ENCODE measurements at regions of chr1 and their contacts with region 1.

Region 1: DNA sequence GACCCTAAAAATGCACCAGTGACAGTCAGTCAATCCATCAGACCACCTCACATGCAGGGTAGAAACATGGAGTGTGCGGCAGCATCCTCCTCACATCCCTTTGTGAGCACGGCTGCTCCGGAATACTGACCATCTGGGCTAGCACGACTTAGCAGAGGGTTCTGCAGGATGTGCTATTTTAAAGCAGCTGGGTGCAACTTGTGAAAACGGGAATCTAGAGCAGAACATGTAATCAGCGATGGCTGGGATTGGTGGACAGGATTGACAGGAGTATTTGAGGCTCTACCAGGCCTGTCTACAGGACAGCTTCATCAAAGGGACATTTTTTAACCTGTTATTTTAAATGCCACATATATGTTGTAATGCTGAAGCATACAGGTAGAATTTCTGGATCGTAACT is 16.8 kb upstream of the PLEKHM2 start:
- DNase-seq: no peak
- ATAC-seq: no peak
- H3K4me3 ChIP-seq: no peak overlapping the region
- H3K27ac ChIP-seq: no peak overlapping the region
- H3K4me1 ChIP-seq: no peaks in the 10 kb centered on the region
- H3K27me3 ChIP-seq: no peaks in the 10 kb centered on the region
- CTCF ChIP-seq: no peak
- EP300 ChIP-seq: no peak
- POLR2A ChIP-seq: 0 out of 2 replicates have a peak, but pooled peaks have one; percentile 21
- RAD21 ChIP-seq: no peak

Region 2: DNA sequence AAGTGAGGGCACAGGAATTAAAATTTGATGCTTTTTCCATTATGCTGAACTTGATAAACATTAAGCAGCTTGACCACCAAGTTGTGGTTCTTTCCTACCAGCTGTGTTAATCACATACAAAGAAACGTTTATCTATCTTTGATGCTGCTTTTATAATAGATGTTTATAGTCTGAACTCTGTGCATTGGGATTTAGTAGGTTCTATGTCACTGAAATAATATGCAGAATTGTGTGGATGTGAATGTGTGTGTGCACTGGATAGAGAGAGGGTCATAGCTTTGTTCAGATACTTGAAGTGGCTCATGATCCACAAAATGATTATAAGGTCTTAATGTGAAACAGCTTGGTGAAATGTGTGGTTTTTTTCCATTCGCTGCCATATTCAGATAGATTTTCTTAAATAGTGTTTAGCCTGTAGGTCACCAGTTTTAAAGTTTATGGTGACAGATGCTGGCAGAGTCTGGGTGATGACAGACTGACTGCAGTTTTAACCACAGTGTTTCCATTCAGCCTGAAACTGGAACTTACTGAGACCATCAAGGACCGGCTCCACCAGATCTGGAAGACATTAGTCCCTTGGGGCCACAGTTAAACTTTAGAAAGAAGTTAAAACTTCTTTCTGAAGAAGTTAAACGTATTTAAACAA is 39.9 kb before region 1 on chr1:
- CTCF ChIA-PET with region 1: no interaction called
- POLR2A ChIA-PET with region 1: no interaction called
- RAD21 ChIA-PET with region 1: no interaction called
- SMC1A ChIA-PET with region 1: interaction called, 12 read pairs
- in situ Hi-C with region 1: no loop called
- intact Hi-C with region 1: no loop called
- DNase-seq: peak; percentile 45
- ATAC-seq: peak; percentile 96
- H3K4me3 ChIP-seq: no peak overlapping the region
- H3K27ac ChIP-seq: peak overlapping the region; percentile 8; the same call in 1 of the 2 replicates
- H3K4me1 ChIP-seq: peaks cover 16% of the 10 kb centered on the region
- H3K27me3 ChIP-seq: no peaks in the 10 kb centered on the region
- CTCF ChIP-seq: no peak
- EP300 ChIP-seq: no peak; a peak in 1 of 4 replicates
- POLR2A ChIP-seq: no peak
- RAD21 ChIP-seq: no peak

Region 3: DNA sequence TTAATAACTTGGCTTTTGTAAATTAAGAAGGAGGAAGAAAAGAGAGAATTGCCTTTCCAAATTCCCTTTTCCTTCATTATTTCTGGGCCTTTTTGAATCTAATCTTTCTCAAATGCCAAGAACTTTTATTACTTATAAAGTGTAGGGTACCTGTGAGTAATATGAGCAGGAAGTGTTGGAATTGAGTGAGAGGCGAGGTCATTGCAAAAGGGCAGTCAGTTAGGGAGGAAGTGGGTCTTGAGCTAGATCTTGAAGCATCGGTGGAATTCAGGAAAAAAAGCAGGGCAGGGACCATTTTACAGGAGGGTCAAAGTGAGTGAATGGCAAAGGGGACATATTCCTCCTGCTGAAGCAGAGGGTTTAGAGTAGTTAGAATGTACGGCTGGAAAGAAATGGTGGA is 26.7 kb before region 1 on chr1:
- CTCF ChIA-PET with region 1: no interaction called
- POLR2A ChIA-PET with region 1: no interaction called
- RAD21 ChIA-PET with region 1: no interaction called
- SMC1A ChIA-PET with region 1: no interaction called
- in situ Hi-C with region 1: no loop called
- intact Hi-C with region 1: no loop called
- DNase-seq: no peak
- ATAC-seq: no peak
- H3K4me3 ChIP-seq: no peak overlapping the region
- H3K27ac ChIP-seq: no peak overlapping the region
- H3K4me1 ChIP-seq: no peaks in the 10 kb centered on the region
- H3K27me3 ChIP-seq: no peaks in the 10 kb centered on the region
- CTCF ChIP-seq: no peak
- EP300 ChIP-seq: no peak
- POLR2A ChIP-seq: no peak
- RAD21 ChIP-seq: no peak

Region 4: GRCh38 chr1:15654091-15654690 is 13.2 kb before region 1 on chr1:
- CTCF ChIA-PET with region 1: interaction called, 6 read pairs
- POLR2A ChIA-PET with region 1: interaction called, 4 read pairs
- RAD21 ChIA-PET with region 1: no interaction called
- SMC1A ChIA-PET with region 1: interaction called, 13 read pairs
- in situ Hi-C with region 1: no loop called
- intact Hi-C with region 1: no loop called
- DNase-seq: no peak
- ATAC-seq: no peak
- H3K4me3 ChIP-seq: no peak overlapping the region
- H3K27ac ChIP-seq: no peak overlapping the region
- H3K4me1 ChIP-seq: no peaks in the 10 kb centered on the region
- H3K27me3 ChIP-seq: no peaks in the 10 kb centered on the region
- CTCF ChIP-seq: no peak
- EP300 ChIP-seq: no peak
- POLR2A ChIP-seq: no peak
- RAD21 ChIP-seq: no peak

Region 5: GRCh38 chr1:15949453-15950245 is 282.3 kb after region 1 on chr1:
- CTCF ChIA-PET with region 1: no interaction called
- POLR2A ChIA-PET with region 1: no interaction called
- RAD21 ChIA-PET with region 1: no interaction called
- SMC1A ChIA-PET with region 1: no interaction called
- in situ Hi-C with region 1: no loop called
- intact Hi-C with region 1: no loop called
- DNase-seq: peak; percentile 71
- ATAC-seq: peak; percentile 92
- H3K4me3 ChIP-seq: peak overlapping the region; percentile 34; the same call in 1 of the 2 replicates
- H3K27ac ChIP-seq: peak overlapping the region; percentile 79
- H3K4me1 ChIP-seq: peaks cover 40% of the 10 kb centered on the region
- H3K27me3 ChIP-seq: no peaks in the 10 kb centered on the region
- CTCF ChIP-seq: no peak
- EP300 ChIP-seq: no peak
- POLR2A ChIP-seq: peak; percentile 70; the same call in 1 of the 2 replicates
- RAD21 ChIP-seq: no peak

Measured in GM12878 (cell line).